ENCODE measurements at regions of chr16 and their contacts with region 1.

Region 1: GRCh38 chr16:4402439-4403132 is 13.8 kb downstream of the CORO7 start:
- DNase-seq: peak; percentile 71
- ATAC-seq: peak; percentile 72
- H3K4me3 Mint-ChIP-seq: no peak overlapping the region
- H3K27ac Mint-ChIP-seq: no peak overlapping the region
- H3K4me1 Mint-ChIP-seq: peaks cover 5% of the 10 kb centered on the region
- H3K27me3 Mint-ChIP-seq: no peaks in the 10 kb centered on the region

Region 2: DNA sequence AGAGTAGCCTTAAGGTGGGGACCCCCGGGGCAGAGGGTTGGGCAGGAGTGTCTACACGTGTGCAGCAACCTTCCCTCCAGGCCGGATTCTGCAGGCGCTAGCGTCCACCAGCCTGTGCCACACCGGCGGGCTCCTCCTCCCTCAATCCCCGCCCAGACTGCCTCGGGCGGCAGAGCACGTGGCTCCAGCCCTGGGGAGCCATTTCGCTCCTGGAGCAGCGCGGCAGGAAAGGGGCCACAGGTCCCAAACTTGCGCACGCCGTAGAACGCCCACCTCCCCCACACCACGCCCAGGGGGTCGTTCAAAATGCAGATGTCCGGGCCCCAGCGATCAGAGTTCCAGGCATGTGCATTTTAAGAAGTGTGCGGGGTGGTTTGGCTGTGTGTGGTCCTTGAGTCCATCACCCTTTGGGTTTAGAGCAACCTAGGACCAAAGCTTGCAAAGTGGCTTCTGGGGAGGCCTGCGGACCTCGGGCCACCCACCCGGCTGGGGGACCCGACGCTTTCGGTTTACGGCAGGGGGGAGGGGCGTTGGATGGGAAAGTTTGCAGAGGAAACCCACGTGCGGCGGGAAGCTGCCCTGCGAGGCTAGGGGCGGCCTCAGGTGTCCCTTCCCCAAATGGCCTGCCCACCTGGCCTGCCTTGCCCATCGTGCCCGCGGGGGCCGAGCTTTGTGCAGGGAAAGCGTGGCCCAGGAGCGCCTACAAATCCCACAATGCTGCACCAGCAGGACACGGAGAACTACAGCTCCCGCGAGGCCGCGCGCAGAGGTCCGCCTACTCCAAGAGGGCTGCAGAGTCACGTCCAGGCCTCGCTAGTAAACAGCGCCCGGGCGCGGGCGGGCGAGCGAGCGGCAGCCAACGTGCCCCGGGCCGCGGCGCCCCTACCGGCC is 131.2 kb before region 1 on chr16:
- CTCF ChIA-PET with region 1: interaction called, 17 read pairs
- DNase-seq: peak; percentile 95
- ATAC-seq: peak; percentile 86
- H3K4me3 Mint-ChIP-seq: peak overlapping the region; percentile 85
- H3K27ac Mint-ChIP-seq: peak overlapping the region; percentile 93
- H3K4me1 Mint-ChIP-seq: peaks cover 21% of the 10 kb centered on the region
- H3K27me3 Mint-ChIP-seq: no peaks in the 10 kb centered on the region

Region 3: GRCh38 chr16:4350787-4351659 is 51.6 kb before region 1 on chr16 and contains the start of gene PAM16:
- CTCF ChIA-PET with region 1: interaction called, 21 read pairs
- DNase-seq: peak; percentile 98
- ATAC-seq: peak; percentile 95
- H3K4me3 Mint-ChIP-seq: peak within 1 kb of the TSS; percentile 84
- H3K27ac Mint-ChIP-seq: peak within 1 kb of the TSS; percentile 87
- H3K4me1 Mint-ChIP-seq: peaks cover 23% of the 10 kb centered on the region
- H3K27me3 Mint-ChIP-seq: no peaks in the 10 kb centered on the region
- total RNA-seq, gene PAM16: 47.5 to 49.4 TPM

Region 4: GRCh38 chr16:4358831-4359561 is 43.6 kb before region 1 on chr16:
- CTCF ChIA-PET with region 1: interaction called, 13 read pairs
- DNase-seq: peak; percentile 74
- ATAC-seq: peak; percentile 78
- H3K4me3 Mint-ChIP-seq: no peak overlapping the region
- H3K27ac Mint-ChIP-seq: no peak overlapping the region
- H3K4me1 Mint-ChIP-seq: no peaks in the 10 kb centered on the region
- H3K27me3 Mint-ChIP-seq: no peaks in the 10 kb centered on the region

Region 5: DNA sequence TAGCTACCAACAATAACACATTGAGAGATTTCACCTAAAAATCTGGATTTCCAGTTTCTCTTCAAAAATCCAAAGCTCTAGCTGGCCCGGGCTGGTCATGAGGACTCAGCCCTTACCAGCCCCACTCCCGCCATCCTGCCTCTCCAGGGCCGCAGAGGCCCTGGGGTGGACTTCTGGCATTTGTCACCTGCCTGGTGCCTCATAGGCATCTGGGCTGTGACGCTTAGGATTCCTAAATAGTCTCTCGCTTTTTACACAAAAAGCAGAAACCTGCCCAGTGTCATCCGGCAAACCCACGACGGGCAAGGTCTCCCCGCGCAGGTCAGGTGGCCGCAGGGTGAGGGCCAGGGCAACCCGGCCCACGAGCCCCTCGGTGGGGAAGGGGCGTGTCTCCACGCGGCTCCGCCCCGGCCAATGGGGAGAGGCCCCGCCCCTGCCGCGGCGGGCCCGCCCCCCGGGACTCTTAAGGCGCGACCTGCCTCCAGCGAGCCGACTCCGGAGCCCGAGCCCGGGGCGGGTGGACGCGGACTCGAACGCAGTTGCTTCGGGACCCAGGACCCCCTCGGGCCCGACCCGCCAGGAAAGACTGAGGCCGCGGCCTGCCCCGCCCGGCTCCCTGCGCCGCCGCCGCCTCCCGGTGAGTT is 31.1 kb before region 1 on chr16 and contains the start of gene VASN:
- CTCF ChIA-PET with region 1: interaction called, 11 read pairs
- DNase-seq: peak; percentile 65
- ATAC-seq: peak; percentile 87
- H3K4me3 Mint-ChIP-seq: peak within 1 kb of the TSS; percentile 60
- H3K27ac Mint-ChIP-seq: no peak within 1 kb of the TSS
- H3K4me1 Mint-ChIP-seq: peaks cover 4% of the 10 kb centered on the region
- H3K27me3 Mint-ChIP-seq: no peaks in the 10 kb centered on the region
- total RNA-seq, gene VASN: not detected

Region 6: GRCh38 chr16:4416200-4417032 is 13.8 kb after region 1 on chr16 and contains the start of gene CORO7:
- CTCF ChIA-PET with region 1: interaction called, 51 read pairs
- DNase-seq: peak; percentile 99
- ATAC-seq: peak; percentile 79
- H3K4me3 Mint-ChIP-seq: peak within 1 kb of the TSS; percentile 90
- H3K27ac Mint-ChIP-seq: peak within 1 kb of the TSS; percentile 92
- H3K4me1 Mint-ChIP-seq: peaks cover 41% of the 10 kb centered on the region
- H3K27me3 Mint-ChIP-seq: no peaks in the 10 kb centered on the region
- total RNA-seq, gene CORO7: 142 to 246 TPM

Region 7: DNA sequence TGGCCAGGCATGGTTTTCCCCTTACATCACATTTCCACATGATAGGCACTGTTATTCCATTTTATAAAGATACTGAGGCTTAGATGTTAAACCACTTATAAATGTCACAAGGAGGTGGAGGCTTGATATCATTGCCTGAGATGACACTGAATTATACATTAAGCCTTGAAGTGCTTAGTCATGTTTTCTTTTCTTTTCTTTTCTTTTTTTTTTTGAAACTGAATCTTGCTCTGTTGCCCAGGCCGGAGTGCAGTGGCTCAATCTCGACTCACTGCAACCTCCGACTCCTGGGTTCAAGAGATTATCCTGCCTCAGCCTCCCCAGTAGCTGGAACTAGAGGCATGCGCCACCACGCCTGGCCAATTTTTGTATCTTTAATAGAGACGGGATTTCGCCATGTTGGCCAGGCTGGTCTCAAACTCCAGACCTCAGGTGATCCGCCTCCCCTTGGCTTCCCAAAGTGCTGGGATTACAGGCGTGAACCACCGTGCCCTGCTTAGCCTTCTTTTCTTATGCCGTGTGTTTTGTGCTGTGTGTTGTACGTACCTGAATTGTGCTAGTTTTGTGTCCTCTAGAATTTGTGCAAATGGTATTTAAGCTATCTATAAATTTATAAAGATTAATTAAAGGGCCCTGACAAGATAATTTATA is 24.3 kb after region 1 on chr16:
- CTCF ChIA-PET with region 1: interaction called, 11 read pairs
- DNase-seq: no peak
- ATAC-seq: no peak
- H3K4me3 Mint-ChIP-seq: peak overlapping the region; percentile 97
- H3K27ac Mint-ChIP-seq: peak overlapping the region; percentile 100
- H3K4me1 Mint-ChIP-seq: peaks cover 37% of the 10 kb centered on the region
- H3K27me3 Mint-ChIP-seq: no peaks in the 10 kb centered on the region